GM12878 (cell line): ENCODE measurements at regions of chr14 and their contacts with region 1.

Region 1: DNA sequence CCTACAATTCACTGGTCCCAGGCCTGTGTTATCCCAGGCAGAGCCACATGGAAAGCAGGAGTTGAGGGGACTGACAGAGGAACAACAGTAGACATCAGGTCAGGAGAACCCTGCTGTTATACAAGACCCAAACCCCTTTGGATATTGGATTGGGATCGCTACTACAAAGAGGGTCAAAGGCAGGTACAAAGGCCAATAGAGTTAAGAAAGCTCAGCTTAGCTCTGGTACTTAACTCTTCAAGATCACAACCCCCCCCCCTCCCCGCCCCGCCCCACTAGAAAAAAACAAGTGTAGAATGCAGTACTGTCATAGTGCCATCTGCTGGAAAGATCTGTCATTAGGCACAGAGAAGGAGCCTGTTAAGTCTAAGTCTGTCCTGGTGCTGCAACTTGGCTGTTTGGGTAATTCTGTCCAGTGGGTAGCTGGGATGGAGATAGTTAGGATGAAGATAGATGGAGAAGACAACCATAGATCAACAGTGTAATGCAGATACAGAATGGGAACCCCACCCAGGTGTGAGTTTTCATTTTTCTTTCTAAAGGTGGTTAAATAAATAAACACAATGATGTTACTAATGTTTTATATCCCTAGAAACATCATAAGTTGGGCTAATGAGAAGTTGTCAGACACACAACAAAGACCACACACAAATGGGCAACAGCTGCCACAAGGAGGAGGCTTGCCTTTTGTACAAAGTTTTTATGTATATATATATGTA is 17.2 kb downstream of the REM2 start:
- DNase-seq: peak; percentile 47
- ATAC-seq: peak; percentile 95
- H3K4me3 ChIP-seq: no peak overlapping the region
- H3K27ac ChIP-seq: no peak overlapping the region
- H3K4me1 ChIP-seq: no peaks in the 10 kb centered on the region
- H3K27me3 ChIP-seq: no peaks in the 10 kb centered on the region
- CTCF ChIP-seq: peak; percentile 65 to 76 (median 69)
- EP300 ChIP-seq: no peak
- POLR2A ChIP-seq: no peak
- RAD21 ChIP-seq: peak; percentile 89

Region 2: GRCh38 chr14:22872033-22872832 is 28.0 kb before region 1 on chr14:
- CTCF ChIA-PET with region 1: interaction called, 91 read pairs
- POLR2A ChIA-PET with region 1: interaction called, 14 read pairs
- RAD21 ChIA-PET with region 1: interaction called, 56 read pairs
- SMC1A ChIA-PET with region 1: interaction called, 53 read pairs
- in situ Hi-C with region 1: no loop called
- intact Hi-C with region 1: loop called (anchors 1 kb)
- DNase-seq: no peak
- ATAC-seq: peak; percentile 56
- H3K4me3 ChIP-seq: peak overlapping the region; percentile 74
- H3K27ac ChIP-seq: peak overlapping the region; percentile 93
- H3K4me1 ChIP-seq: peaks cover 8% of the 10 kb centered on the region
- H3K27me3 ChIP-seq: no peaks in the 10 kb centered on the region
- CTCF ChIP-seq: peak; percentile 95 to 98 (median 95)
- EP300 ChIP-seq: no peak
- POLR2A ChIP-seq: no peak
- RAD21 ChIP-seq: peak; percentile 75

Region 3: DNA sequence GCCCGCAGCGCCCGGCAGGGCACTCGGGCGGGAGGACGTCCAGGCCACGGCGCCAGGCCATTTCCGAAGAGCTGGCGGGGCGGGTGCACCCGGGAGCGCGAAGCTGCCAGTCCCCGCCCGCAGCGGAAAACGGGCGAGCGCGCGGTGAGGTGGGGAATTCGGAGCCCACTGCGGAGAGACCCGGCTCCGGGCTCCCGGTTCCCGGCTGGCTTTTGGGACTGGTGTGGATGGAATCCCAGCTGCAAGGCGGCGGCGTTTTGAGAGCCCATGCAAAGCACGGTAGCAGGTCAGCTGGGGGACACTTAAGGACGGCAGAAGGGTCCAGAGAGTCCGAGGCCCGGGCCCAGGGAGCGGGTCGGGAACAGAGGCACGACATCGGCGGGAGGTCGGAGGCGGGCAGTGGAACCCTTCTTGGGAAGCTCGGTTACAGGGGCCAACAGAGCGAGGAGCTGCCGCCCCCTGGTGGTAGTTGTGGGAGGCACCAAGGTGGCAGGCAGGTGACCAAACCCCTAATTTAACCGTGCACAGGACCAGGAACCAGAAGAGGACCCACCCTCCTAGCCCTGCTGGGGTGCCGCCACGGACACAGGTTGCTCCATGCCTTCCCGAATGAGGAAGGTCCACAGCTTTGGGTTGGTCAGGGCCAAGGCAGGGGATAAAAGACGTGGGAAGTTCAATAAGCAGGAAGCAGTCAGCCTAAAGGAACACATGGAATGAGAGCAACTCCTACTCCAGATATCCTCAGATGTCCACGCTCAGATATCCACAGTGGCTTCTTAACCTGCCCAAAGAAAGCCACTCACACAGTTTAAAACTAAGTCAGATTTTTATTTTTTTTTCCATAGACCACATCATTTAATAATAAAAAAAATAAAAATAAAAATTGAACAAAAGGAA is 157.8 kb after region 1 on chr14:
- CTCF ChIA-PET with region 1: no interaction called
- POLR2A ChIA-PET with region 1: no interaction called
- RAD21 ChIA-PET with region 1: no interaction called
- SMC1A ChIA-PET with region 1: no interaction called
- in situ Hi-C with region 1: no loop called
- intact Hi-C with region 1: no loop called
- DNase-seq: peak; percentile 40
- ATAC-seq: peak; percentile 82
- H3K4me3 ChIP-seq: peak overlapping the region; percentile 79
- H3K27ac ChIP-seq: no peak overlapping the region
- H3K4me1 ChIP-seq: peaks cover 12% of the 10 kb centered on the region
- H3K27me3 ChIP-seq: no peaks in the 10 kb centered on the region
- CTCF ChIP-seq: peak; percentile 92 to 97 (median 96); a peak in 5 of 6 replicates
- EP300 ChIP-seq: no peak
- POLR2A ChIP-seq: peak; percentile 74
- RAD21 ChIP-seq: peak; percentile 78